ENCODE measurements at regions of chr12 and their contacts with region 1.

Region 1: DNA sequence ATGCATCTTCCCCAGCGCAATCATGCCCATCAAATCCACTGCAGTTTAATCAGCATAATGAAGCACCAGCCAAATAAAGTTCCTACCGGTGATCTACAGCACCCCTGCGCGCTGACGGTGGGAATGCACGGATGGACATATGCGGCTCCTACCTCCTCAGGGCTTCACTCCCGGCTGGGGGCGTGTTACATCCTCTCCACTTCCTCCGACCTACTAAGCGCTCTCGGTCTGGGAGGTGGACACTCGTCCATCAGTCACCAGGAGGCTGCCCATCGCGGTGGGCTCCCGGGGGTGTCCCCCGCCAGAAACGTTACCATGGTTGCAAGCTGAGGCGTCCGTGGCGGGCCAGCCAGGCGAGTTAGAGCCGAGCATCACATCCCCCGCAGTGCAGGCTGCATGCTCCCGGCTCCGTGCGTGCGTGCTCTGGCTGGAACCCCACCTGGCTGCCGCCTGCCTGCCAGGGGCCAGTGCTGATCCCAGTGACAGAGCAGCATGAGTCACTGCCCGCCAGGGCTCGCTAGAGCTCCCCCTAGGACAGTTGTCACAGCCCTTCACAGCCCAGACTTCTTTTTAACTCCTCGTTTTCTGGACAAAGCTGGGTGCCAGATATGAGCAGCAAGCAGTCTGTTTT is 73.0 kb downstream of the CIT start:
- DNase-seq: peak; percentile 86
- H3K4me3 ChIP-seq: peak overlapping the region; percentile 17 to 19; a peak in 2 of 4 replicates
- H3K27ac ChIP-seq: no peak overlapping the region
- H3K4me1 ChIP-seq: peaks cover 7 to 8% of the 10 kb centered on the region in 2 experiments; a peak in 3 of 4 replicates
- H3K27me3 ChIP-seq: no peaks in the 10 kb centered on the region
- CTCF ChIP-seq: peak; percentile 54
- EP300 ChIP-seq: no peak
- RAD21 ChIP-seq: peak; percentile 66

Region 2: GRCh38 chr12:119819322-119819721 is 15.2 kb after region 1 on chr12:
- CTCF ChIA-PET with region 1: interaction called, 10 read pairs
- POLR2A ChIA-PET with region 1: no interaction called
- DNase-seq: no peak
- H3K4me3 ChIP-seq: no peak overlapping the region
- H3K27ac ChIP-seq: no peak overlapping the region
- H3K4me1 ChIP-seq: no peaks in the 10 kb centered on the region; a peak in 1 of 4 replicates
- H3K27me3 ChIP-seq: no peaks in the 10 kb centered on the region
- CTCF ChIP-seq: no peak
- EP300 ChIP-seq: no peak
- RAD21 ChIP-seq: no peak

Measured in SK-N-SH (cell line).